ENCODE measurements at regions of chr20 and their contacts with region 1.

Region 1: GRCh38 chr20:63979560-63980316 is at the start of gene SAMD10:
- DNase-seq: peak; percentile 58 to 89
- H3K4me3 ChIP-seq: peak within 1 kb of the TSS; percentile 88
- H3K4me1 ChIP-seq: peaks cover 11% of the 10 kb centered on the region
- H3K27me3 ChIP-seq: no peaks in the 10 kb centered on the region

Region 2: GRCh38 chr20:63540417-63541186 is 439.1 kb before region 1 on chr20:
- in situ Hi-C with region 1: loop called (anchors 5 kb)
- DNase-seq: no peak
- H3K4me3 ChIP-seq: no peak overlapping the region
- H3K4me1 ChIP-seq: no peaks in the 10 kb centered on the region
- H3K27me3 ChIP-seq: peaks cover 3% of the 10 kb centered on the region; the same call in 1 of the 2 replicates

Region 3: GRCh38 chr20:64079273-64080012 is 99.7 kb after region 1 on chr20 and contains the start of gene RGS19:
- in situ Hi-C with region 1: no loop called
- DNase-seq: peak; percentile 71 to 88
- H3K4me3 ChIP-seq: peak within 1 kb of the TSS; percentile 63
- H3K4me1 ChIP-seq: peaks cover 17% of the 10 kb centered on the region
- H3K27me3 ChIP-seq: no peaks in the 10 kb centered on the region